Aorta (tissue), 5 donors: ENCODE measurements at regions of chr1 and their contacts with region 1.

Region 1: DNA sequence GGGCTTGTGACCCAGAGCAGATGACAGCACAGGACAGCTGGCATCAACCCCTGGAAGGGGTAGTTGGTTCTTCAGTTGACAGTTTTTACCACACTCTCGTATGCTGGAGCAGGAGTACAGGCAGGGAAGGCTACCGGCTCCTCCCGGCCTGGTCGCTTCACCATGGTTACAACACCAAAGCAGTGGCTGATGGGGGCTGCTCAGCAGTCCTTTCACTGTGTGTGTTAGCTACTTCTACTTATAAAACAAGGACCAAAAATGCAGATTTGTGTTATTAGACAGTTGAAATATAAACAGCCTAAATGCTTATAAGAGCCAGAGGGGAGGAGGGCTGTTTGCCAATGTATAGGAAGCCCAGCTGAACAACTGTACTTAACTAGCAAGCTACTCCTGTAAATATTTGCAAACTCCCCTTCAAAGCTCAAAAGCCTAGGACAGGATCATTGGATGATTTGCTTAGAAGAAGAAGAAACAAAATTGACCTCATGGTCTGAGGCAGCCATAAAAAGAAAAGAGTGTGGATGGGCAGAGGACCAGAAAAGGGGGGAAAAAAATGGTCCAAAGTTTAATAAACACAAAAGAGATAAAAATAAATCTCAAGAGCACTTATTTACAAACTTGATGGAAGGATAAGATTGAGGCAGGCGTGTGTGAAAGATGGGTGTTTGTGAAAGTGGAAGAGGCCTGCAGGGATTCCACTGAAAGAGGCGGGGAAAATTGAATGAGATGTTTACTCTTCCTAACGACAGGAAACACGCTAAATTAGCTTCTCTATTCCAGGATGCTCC is 57.1 kb downstream of the TGFB2 start:
- DNase-seq: no peak
- ATAC-seq: no peak
- H3K4me3 ChIP-seq: no peak overlapping the region
- H3K27ac ChIP-seq: no peak overlapping the region
- H3K4me1 ChIP-seq: no peaks in the 10 kb centered on the region
- H3K27me3 ChIP-seq: no peaks in the 10 kb centered on the region

Region 2: GRCh38 chr1:218250492-218250891 is 151.7 kb before region 1 on chr1:
- intact Hi-C with region 1: no loop called
- DNase-seq: no peak
- ATAC-seq: no peak
- H3K4me3 ChIP-seq: no peak overlapping the region
- H3K27ac ChIP-seq: no peak overlapping the region
- H3K4me1 ChIP-seq: no peaks in the 10 kb centered on the region
- H3K27me3 ChIP-seq: no peaks in the 10 kb centered on the region

Region 3: DNA sequence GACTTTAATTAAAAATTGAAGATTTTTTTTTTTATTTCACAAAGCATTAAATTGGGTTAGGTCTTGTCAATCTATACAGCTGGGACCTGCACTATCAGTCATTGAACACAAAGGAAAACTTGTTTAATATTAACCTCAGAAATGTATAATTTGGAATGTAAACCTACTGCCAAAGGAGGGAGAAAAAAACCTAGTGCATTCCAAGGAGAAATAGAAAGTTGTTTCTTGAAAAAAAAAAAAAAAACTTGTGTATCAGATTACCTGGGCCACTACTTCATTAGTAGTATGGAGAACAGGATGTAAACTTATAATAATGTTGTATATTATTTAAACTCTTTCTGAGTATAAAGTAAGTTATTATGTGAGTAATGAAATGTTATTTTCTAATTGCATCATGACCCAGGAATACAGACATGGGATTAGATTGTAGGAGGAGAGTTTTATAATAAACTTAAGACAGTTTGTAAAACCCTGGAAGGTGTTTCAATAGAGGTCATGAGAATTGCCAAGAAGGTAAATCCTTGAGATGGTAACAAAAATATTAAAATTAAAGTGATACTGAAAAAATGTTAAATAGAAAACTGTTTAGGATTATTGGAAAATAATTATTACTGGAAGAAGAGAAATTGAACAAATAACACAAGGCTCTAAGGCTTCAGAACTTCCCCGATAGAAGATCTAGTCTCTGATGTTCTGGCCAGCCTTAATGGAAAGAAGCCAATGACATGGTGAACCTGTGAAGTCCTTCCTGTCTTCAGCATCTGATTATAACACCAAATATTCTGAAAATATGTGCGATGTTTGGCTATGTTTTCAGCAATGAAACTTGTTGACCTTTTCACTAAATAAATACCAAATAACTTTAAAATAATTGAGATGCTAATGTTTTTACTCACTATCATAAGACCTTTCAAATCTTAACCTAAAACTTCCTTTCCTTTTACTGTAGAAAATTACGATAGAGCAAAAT is 358.7 kb after region 1 on chr1:
- intact Hi-C with region 1: loop called in 1 of 2 experiments (anchors 5 kb)
- DNase-seq: no peak
- ATAC-seq: no peak
- H3K4me3 ChIP-seq: no peak overlapping the region
- H3K27ac ChIP-seq: no peak overlapping the region
- H3K4me1 ChIP-seq: no peaks in the 10 kb centered on the region
- H3K27me3 ChIP-seq: no peaks in the 10 kb centered on the region

Region 4: DNA sequence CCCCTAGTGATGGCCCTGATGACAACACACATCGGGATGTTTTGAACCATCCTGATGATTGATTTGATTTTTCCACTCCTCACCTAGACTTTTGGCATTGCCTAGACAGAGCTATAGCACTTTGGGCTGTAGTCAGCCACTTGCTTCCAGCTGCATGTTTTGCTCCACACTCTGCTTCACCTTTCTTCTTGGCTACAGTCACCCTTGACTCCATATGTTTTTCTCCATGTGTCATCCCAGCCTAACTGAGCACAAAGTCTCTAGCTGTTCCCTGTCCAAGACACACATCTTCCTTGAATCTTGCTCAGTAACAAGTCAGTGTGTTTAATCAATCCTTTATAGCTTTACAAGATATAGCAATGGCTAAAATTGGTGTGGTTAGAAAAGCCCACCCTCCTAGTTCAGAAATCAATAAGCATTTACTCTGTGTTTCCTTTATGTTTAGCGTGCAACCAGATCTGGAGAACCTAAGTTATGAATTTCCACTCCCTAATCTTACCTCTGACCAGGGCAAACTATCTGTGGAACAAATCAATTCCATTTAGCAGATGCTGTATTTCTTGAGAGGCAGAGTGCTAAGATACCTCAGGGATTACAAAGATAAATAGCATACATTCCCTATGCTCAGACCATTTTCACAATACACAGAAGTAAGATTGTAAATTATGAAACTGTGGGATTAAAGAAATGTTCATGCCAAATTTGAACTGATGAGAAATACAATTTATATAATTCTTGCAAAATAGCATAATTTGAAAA is 673.1 kb after region 1 on chr1:
- intact Hi-C with region 1: no loop called
- DNase-seq: no peak
- ATAC-seq: no peak
- H3K4me3 ChIP-seq: no peak overlapping the region
- H3K27ac ChIP-seq: no peak overlapping the region
- H3K4me1 ChIP-seq: no peaks in the 10 kb centered on the region
- H3K27me3 ChIP-seq: no peaks in the 10 kb centered on the region